CD4-positive, alpha-beta T cell (primary cell): ENCODE measurements at regions of chr19 and their contacts with region 1.

Region 1: DNA sequence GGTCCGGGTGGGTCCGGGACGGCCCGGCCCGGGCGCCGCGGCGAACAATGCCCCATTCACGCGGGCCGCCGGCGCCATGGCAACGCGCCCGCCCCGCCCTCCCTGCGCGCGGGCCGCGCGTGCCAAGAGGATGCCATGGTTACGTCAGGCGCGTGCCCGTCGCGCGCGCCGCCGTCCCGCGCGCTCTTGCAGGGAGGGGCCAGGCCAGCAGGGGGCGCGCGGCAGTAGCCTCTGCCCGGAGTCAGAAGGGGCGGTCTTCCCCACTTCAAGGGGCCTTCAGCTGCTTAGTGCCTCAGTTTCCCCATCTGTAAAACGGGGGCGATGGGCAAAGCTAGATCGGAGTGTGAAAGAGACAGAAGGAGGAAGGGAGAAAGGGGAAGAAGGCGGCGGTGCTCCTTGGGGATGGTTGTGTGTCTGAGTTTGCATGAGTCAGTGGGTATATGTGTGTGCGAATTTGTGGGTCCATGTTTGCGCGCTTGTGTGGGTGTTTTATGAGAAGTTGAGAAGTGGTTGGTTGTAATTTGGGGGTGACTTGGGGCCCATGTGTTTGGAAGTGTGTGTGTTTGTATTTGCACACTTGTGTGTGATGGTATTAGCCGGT is 11.6 kb upstream of the NFIX start:
- DNase-seq: peak; percentile 66 to 93 (median 82)
- ATAC-seq: peak; percentile 86
- H3K4me3 ChIP-seq: no peak overlapping the region
- H3K4me3 Mint-ChIP-seq: no peak overlapping the region
- H3K27ac ChIP-seq: no peak overlapping the region
- H3K27ac Mint-ChIP-seq: no peak overlapping the region
- H3K4me1 ChIP-seq: peaks cover 16% of the 10 kb centered on the region
- H3K4me1 Mint-ChIP-seq: no peaks in the 10 kb centered on the region
- H3K27me3 ChIP-seq: peaks cover 0 to 2% of the 10 kb centered on the region in 2 experiments
- H3K27me3 Mint-ChIP-seq: peaks cover 5% of the 10 kb centered on the region
- CTCF ChIP-seq: peak; percentile 71

Region 2: GRCh38 chr19:13033819-13034611 is 50.4 kb after region 1 on chr19:
- CTCF ChIA-PET with region 1: interaction called, 3 read pairs
- POLR2A ChIA-PET with region 1: no interaction called
- intact Hi-C with region 1: loop called (anchors 5 to 10 kb)
- DNase-seq: peak in 8 of 14 experiments; percentile 15 to 58 (median 34)
- ATAC-seq: peak; percentile 61
- H3K4me3 ChIP-seq: no peak overlapping the region
- H3K4me3 Mint-ChIP-seq: no peak overlapping the region
- H3K27ac ChIP-seq: no peak overlapping the region
- H3K27ac Mint-ChIP-seq: no peak overlapping the region
- H3K4me1 ChIP-seq: no peaks in the 10 kb centered on the region
- H3K4me1 Mint-ChIP-seq: no peaks in the 10 kb centered on the region
- H3K27me3 ChIP-seq: peaks cover 0 to 6% of the 10 kb centered on the region in 2 experiments
- H3K27me3 Mint-ChIP-seq: no peaks in the 10 kb centered on the region
- CTCF ChIP-seq: peak; percentile 46

Region 3: DNA sequence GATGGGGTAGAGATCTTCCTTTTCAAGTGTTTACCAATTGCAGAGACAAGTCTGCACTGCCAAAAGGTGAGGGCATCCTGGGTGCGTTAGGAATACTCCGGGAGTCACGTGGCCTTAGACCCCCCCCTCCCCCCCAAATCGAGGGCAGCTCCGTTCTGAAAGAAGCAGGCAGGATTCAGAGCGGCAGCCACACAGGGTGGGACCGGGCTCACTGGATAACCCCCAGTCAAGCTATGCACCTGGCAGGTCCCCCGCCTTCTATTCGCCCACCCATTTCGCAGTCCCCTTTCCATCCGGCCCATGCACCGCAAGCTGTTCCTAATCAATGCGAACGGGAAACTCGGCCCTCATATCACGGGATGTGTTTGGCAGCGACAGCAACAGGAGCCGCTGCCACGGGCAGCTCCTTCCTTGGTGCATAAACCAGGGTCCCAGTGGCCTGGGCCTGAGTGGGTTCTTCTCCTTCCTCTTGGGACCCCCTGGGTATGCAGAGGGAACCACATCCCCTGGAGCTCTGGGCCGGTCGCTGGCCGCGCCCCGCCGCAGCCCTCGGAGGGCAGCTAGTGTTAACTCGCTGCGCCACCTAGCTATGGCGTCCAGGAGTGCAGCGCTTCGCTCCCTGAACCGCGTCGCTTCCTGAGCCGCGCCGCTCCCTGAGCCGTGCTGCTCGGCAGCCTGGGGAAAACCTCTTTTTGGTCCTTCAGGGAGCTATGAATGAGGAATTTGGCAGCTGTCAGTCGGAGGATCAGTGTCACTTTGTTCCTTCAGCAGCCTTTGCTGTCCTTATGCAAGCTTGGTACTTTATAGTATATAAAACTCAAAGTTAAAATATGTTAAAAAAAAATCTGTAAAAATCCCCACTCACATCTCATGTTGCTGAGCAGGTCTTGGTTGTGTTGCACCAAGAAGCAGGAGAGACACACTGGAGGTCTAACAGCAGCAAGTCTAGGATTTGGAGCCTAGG is 77.6 kb after region 1 on chr19:
- CTCF ChIA-PET with region 1: interaction called, 41 read pairs
- POLR2A ChIA-PET with region 1: no interaction called
- intact Hi-C with region 1: loop called (anchors 1 kb)
- DNase-seq: peak; percentile 58 to 86 (median 73)
- ATAC-seq: peak; percentile 99
- H3K4me3 ChIP-seq: peak overlapping the region; percentile 54
- H3K4me3 Mint-ChIP-seq: peak overlapping the region; percentile 81
- H3K27ac ChIP-seq: no peak overlapping the region
- H3K27ac Mint-ChIP-seq: no peak overlapping the region
- H3K4me1 ChIP-seq: peaks cover 16% of the 10 kb centered on the region
- H3K4me1 Mint-ChIP-seq: peaks cover 8% of the 10 kb centered on the region
- H3K27me3 ChIP-seq: peaks cover 11 to 16% of the 10 kb centered on the region in 2 experiments
- H3K27me3 Mint-ChIP-seq: peaks cover 22% of the 10 kb centered on the region
- CTCF ChIP-seq: peak; percentile 96

Region 4: DNA sequence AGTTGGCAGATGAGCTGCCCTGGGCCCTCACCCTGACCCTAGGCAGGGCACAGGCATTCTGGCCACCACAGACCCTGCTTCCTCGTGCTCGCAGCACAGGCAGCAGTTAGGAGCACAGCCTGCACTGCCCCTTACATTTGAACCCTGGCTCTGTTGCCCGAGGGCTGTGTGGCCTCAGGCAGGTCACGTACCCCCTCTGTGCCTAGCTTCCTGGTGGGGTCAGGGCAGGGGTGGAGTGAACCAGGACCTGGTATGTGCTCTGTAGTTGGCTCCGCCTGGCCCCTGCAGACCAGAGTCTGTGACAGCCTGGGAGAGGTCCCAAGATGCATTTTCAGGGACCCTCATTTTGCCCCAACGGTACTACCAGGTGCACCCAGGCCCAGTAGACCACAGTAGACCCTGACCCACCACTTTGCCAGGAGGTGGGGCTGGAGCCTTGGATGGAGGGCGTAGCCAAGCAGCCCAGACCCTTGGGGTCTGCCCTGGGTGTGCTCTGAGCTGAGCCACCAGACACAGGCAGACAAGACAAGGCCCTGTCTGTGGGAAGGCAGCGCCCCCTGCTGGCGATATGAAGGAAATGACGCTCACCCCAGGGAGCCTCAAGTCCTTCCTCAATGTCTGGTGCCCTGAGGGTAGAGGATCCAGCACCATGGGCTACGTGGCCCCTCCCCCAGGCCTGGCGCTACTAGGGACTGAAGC is 109.9 kb after region 1 on chr19:
- CTCF ChIA-PET with region 1: interaction called, 83 read pairs
- POLR2A ChIA-PET with region 1: no interaction called
- intact Hi-C with region 1: loop called (anchors 1 kb)
- DNase-seq: peak; percentile 68 to 91 (median 76)
- ATAC-seq: peak; percentile 73
- H3K4me3 ChIP-seq: no peak overlapping the region
- H3K4me3 Mint-ChIP-seq: peak overlapping the region; percentile 51
- H3K27ac ChIP-seq: no peak overlapping the region
- H3K27ac Mint-ChIP-seq: no peak overlapping the region
- H3K4me1 ChIP-seq: peaks cover 48% of the 10 kb centered on the region
- H3K4me1 Mint-ChIP-seq: peaks cover 27% of the 10 kb centered on the region
- H3K27me3 ChIP-seq: peaks cover 20 to 23% of the 10 kb centered on the region in 2 experiments
- H3K27me3 Mint-ChIP-seq: peaks cover 29% of the 10 kb centered on the region
- CTCF ChIP-seq: peak; percentile 89

Region 5: DNA sequence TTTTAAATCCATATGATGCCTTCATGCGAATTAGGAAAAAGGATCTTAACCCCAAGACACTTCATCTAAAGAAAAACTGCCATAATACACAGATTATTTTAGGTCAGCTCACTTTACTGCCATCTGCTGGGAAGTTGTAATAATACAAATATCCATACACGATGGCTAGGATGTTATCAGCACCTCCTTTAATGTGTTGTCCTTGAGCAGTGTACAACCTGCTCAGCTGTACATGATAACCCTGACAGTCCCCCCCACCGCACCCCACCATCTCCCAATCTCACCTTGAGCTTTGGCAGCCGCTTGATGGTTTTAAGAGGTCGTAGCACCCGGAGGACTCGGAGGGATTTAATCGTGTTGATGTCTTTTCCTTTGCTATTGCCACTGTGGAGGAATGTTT is 278.8 kb after region 1 on chr19:
- CTCF ChIA-PET with region 1: no interaction called
- POLR2A ChIA-PET with region 1: no interaction called
- intact Hi-C with region 1: loop called (anchors 1 to 2 kb)
- DNase-seq: peak in 3 of 14 experiments; percentile 70 to 74 (median 71)
- ATAC-seq: peak; percentile 64
- H3K4me3 ChIP-seq: no peak overlapping the region
- H3K4me3 Mint-ChIP-seq: no peak overlapping the region
- H3K27ac ChIP-seq: no peak overlapping the region
- H3K27ac Mint-ChIP-seq: no peak overlapping the region
- H3K4me1 ChIP-seq: no peaks in the 10 kb centered on the region
- H3K4me1 Mint-ChIP-seq: no peaks in the 10 kb centered on the region
- H3K27me3 ChIP-seq: no peaks in the 10 kb centered on the region
- H3K27me3 Mint-ChIP-seq: peaks cover 17% of the 10 kb centered on the region
- CTCF ChIP-seq: peak; percentile 64

Region 6: DNA sequence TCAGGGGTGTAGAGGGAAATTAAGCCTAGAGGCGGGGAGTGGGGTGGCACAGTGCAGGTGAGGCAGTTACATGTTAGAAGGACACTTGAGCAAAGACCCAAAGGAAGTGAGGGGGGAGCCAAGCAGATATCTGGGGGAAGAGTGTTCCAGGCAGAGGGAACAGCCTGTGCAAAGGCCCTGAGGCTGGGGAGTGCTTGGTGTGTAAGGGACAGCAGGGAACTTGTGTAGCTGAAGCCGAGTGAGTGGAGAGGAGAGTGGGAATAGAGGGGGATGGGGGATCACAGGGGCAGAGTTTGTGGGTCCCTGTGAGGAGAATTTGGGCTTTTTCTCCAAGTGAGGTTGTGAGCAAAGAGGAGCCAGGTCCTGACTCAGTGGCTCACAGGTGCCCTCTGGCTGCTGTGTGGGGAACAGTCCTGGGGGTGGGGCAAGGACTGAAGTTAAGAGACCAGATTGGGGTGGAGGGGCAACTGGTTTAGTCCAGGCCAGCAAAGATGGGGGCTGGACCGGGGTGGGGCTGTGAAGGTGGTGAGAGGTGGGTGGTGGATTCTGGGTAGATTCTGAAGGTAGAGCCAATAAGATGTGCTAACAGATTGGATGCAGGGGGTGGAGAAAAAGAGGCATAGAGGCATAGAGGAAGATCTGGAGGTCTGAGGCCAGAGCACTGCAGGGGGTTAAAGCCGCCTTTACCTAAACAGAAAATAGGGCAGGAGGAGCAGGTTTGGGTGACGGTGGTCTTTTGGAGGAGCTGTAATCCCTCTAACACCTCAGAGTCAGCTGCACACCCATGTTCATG is 447.3 kb after region 1 on chr19:
- CTCF ChIA-PET with region 1: no interaction called
- POLR2A ChIA-PET with region 1: no interaction called
- intact Hi-C with region 1: loop called in 1 of 2 experiments (anchors 5 kb)
- DNase-seq: peak; percentile 11 to 67 (median 38)
- ATAC-seq: peak; percentile 48
- H3K4me3 ChIP-seq: no peak overlapping the region
- H3K4me3 Mint-ChIP-seq: no peak overlapping the region
- H3K27ac ChIP-seq: no peak overlapping the region
- H3K27ac Mint-ChIP-seq: no peak overlapping the region
- H3K4me1 ChIP-seq: no peaks in the 10 kb centered on the region
- H3K4me1 Mint-ChIP-seq: no peaks in the 10 kb centered on the region
- H3K27me3 ChIP-seq: peaks cover 5 to 8% of the 10 kb centered on the region in 2 experiments
- H3K27me3 Mint-ChIP-seq: peaks cover 27% of the 10 kb centered on the region
- CTCF ChIP-seq: peak; percentile 59

Region 7: GRCh38 chr19:13588957-13589833 is 605.6 kb after region 1 on chr19:
- CTCF ChIA-PET with region 1: no interaction called
- POLR2A ChIA-PET with region 1: no interaction called
- intact Hi-C with region 1: loop called (anchors 2 kb)
- DNase-seq: peak; percentile 61 to 88 (median 80)
- ATAC-seq: peak; percentile 97
- H3K4me3 ChIP-seq: no peak overlapping the region
- H3K4me3 Mint-ChIP-seq: no peak overlapping the region
- H3K27ac ChIP-seq: no peak overlapping the region
- H3K27ac Mint-ChIP-seq: no peak overlapping the region
- H3K4me1 ChIP-seq: peaks cover 9% of the 10 kb centered on the region
- H3K4me1 Mint-ChIP-seq: no peaks in the 10 kb centered on the region
- H3K27me3 ChIP-seq: peaks cover 0 to 12% of the 10 kb centered on the region in 2 experiments
- H3K27me3 Mint-ChIP-seq: peaks cover 20% of the 10 kb centered on the region
- CTCF ChIP-seq: peak; percentile 99